ENCODE measurements at regions of chr15 and their contacts with region 1.

Region 1: GRCh38 chr15:40582726-40583246 is 11.3 kb upstream of the KNL1 start:
- H3K4me3 ChIP-seq: no peak overlapping the region
- H3K27ac ChIP-seq: no peak overlapping the region
- H3K4me1 ChIP-seq: no peaks in the 10 kb centered on the region
- CTCF ChIP-seq: no peak

Region 2: DNA sequence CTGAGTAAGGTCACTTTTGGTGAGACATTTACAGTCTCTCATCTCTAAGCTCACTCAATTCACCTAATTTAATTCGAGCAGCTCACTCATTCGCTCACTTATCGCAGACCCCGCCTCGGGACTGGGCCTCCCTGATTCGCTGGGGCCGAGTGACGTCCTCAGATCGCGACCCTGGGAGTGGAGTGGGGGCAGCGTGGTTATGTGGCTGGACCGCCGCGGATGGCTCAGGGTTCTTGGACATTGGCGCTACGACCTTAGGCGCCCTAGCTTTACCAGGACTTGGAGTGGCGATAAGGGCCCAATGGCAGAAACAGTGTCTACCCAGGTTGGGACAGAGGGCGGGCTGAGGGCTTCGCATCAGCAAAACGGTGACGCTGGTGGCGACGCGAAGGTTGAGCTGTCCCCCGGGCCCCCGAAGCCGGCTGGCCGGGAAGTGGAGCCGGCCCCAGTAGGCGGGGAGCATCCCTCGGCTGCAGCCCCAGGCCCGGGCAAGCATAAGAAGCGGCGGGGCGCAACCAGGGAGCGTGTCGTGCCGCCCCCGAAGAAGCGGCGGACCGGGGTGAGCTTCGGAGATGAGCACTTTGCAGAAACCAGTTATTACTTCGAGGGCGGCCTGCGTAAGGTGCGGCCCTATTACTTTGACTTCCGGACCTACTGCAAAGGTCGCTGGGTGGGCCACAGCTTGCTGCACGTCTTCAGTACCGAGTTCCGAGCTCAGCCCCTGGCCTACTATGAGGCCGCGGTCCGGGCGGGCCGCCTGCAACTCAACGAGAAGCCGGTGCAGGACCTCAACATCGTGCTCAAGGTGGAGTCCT is 13.4 kb before region 1 on chr15 and contains the start of gene RPUSD2:
- CTCF ChIA-PET with region 1: no interaction called
- POLR2A ChIA-PET with region 1: interaction called, 13 read pairs
- H3K4me3 ChIP-seq: peak within 1 kb of the TSS; percentile 77
- H3K27ac ChIP-seq: no peak within 1 kb of the TSS; the same call in 1 of the 2 replicates
- H3K4me1 ChIP-seq: peaks cover 8% of the 10 kb centered on the region; the same call in 1 of the 2 replicates
- CTCF ChIP-seq: no peak